SK-N-SH (cell line): ENCODE measurements at regions of chr20 and their contacts with region 1.

Region 1: DNA sequence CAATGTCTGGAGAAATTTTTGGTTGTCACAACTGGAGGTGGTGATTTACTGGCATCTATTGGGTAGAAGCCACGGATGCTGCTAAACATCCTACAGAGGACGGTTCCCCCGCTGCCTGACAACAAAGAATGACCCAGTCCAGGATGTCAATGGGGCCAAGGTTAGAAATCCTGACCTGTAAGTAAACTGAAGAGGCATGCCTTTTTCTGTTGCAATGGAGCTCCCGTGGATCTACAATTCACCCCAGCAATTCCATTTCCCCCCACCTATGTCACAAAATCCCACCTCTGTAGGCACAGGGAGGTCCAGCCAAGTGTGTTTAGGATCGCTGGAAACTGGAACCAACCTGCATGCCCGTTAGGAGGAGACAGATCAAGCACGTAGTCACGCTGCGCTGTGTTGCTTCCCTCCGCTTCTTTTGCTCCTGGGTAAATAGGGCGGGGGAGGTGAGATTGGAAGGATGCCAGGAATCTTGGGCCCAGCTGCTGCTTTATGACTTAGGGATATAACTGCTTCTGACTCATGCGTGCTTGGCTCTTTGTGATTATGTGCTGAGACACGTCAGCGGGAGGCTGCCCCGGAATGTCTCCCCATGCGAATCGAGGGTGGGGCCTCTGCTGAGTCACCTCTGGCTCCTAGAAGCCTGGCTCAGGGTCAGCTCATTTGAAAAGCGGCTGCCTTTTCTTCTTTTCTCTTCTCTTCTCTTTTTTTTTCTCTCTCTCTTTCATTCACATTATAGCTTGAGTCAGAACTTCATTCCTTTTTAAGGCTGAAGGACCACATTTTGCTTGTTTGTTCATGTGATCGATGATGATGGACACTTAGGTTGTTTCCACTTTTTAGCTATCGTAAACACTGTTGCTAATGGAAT is 12.4 kb upstream of the PEDS1 start:
- DNase-seq: peak; percentile 88
- H3K4me3 ChIP-seq: peak overlapping the region; percentile 36 to 62
- H3K27ac ChIP-seq: peak overlapping the region; percentile 87 to 93
- H3K4me1 ChIP-seq: peaks cover 12 to 14% of the 10 kb centered on the region in 2 experiments; a peak in 3 of 4 replicates
- H3K27me3 ChIP-seq: no peaks in the 10 kb centered on the region
- CTCF ChIP-seq: no peak
- EP300 ChIP-seq: peak; percentile 75 to 83; a peak in 3 of 4 replicates
- RAD21 ChIP-seq: no peak

Region 2: DNA sequence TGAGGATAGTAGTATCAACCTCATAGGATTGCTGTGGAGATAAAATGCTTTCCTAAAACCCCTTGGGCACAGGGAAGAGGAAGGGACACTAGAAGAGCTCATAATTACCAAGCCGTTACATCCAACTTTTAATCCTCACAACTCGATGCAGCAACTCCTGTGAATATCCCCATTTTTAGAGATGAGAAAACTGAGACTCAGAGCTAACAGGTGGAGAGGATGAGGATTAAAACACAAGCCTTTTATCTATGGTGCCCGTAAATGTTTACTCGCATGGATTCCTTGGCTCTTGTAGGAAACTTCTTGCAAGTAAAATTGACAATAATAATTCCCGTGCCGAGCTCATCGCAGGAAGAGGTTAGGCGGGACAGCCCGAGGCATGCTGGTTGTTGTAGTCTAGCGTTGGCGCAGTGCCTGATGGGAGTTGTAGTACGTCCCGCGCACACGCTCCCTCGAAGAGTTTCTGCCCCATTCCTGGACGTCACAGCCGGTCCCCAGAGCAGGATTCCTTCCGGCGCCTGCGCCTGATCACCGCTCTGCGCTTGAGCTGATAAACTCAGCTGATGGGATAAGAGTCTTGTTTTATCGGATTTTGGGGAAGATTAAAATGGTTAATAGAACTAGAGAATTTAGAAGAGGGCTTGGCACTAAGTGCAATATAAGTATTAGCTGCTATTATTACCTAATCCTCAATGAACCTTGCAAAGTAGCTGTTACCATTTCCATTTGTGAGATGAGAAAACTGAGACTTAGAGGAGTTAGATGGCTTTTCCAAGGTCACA is 50.1 kb before region 1 on chr20:
- CTCF ChIA-PET with region 1: interaction called, 297 read pairs
- POLR2A ChIA-PET with region 1: interaction called, 5 read pairs
- DNase-seq: peak; percentile 89
- H3K4me3 ChIP-seq: peak overlapping the region; percentile 64 to 70
- H3K27ac ChIP-seq: peak overlapping the region; percentile 52 to 85; a peak in 3 of 4 replicates
- H3K4me1 ChIP-seq: peaks cover 15 to 37% of the 10 kb centered on the region in 2 experiments; a peak in 3 of 4 replicates
- H3K27me3 ChIP-seq: no peaks in the 10 kb centered on the region
- CTCF ChIP-seq: no peak
- EP300 ChIP-seq: no peak
- RAD21 ChIP-seq: no peak

Region 3: GRCh38 chr20:50133474-50134217 is 32.3 kb before region 1 on chr20:
- CTCF ChIA-PET with region 1: interaction called, 23 read pairs
- POLR2A ChIA-PET with region 1: no interaction called
- DNase-seq: no peak
- H3K4me3 ChIP-seq: no peak overlapping the region
- H3K27ac ChIP-seq: no peak overlapping the region
- H3K4me1 ChIP-seq: no peaks in the 10 kb centered on the region; a peak in 2 of 4 replicates
- H3K27me3 ChIP-seq: no peaks in the 10 kb centered on the region
- CTCF ChIP-seq: no peak; the same call in 1 of the 2 replicates
- EP300 ChIP-seq: no peak
- RAD21 ChIP-seq: no peak

Region 4: GRCh38 chr20:50138479-50139393 is 27.2 kb before region 1 on chr20:
- CTCF ChIA-PET with region 1: interaction called, 23 read pairs
- POLR2A ChIA-PET with region 1: no interaction called
- DNase-seq: no peak
- H3K4me3 ChIP-seq: no peak overlapping the region
- H3K27ac ChIP-seq: no peak overlapping the region
- H3K4me1 ChIP-seq: peaks cover 0 to 14% of the 10 kb centered on the region in 2 experiments; a peak in 2 of 4 replicates
- H3K27me3 ChIP-seq: no peaks in the 10 kb centered on the region
- CTCF ChIP-seq: no peak; the same call in 1 of the 2 replicates
- EP300 ChIP-seq: no peak
- RAD21 ChIP-seq: no peak

Region 5: DNA sequence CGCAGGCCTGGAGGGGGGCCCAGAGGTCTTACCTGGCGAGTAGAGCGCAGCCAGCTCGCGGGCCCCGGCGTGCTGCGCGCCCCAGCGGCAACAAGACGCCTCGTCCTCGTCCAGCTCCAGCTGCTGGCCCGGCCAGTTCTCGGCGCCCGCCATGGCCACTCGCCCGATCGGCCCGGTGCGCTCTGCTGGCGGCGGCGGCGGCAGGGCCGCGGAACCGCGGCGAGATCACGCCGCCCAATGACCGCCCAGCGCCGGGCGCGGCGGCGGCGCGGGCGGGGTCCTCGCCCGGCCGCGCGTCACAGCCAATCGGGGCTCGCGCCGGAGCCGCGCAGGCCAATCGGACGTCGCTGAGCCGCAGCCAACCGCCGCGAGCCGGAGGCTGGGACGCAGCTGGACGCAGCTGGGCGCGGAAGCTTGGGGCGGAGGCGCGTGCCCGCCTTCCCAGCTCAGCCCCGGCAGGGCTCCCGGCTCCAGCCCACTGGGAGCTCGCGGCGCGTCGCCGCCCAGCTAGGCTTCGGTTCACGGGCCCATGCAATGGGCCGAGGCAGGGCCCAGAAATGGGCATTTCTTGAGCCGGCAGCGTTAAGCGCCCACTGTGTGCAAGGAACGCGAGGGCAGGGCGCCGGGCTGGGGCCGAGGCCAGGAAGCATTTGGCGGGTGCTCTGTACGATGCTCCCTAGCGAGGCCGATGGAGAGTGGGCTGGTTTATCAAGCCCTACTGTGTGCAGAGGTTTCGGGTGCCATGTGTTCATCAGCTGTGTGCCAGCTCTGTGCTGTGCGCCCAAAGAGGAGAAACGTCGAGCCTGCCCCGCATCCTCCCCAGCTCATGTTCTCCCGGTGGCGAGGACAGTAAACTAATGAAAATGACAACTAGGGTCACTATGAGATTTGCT is 12.2 kb before region 1 on chr20 and contains the start of gene PEDS1:
- CTCF ChIA-PET with region 1: interaction called, 15 read pairs
- POLR2A ChIA-PET with region 1: interaction called, 5 read pairs
- DNase-seq: peak; percentile 99
- H3K4me3 ChIP-seq: peak within 1 kb of the TSS; percentile 78 to 97
- H3K27ac ChIP-seq: peak within 1 kb of the TSS; percentile 41 to 82; a peak in 3 of 4 replicates
- H3K4me1 ChIP-seq: peaks cover 3 to 32% of the 10 kb centered on the region in 2 experiments; a peak in 1 of 4 replicates
- H3K27me3 ChIP-seq: no peaks in the 10 kb centered on the region
- CTCF ChIP-seq: no peak
- EP300 ChIP-seq: peak in 1 of 2 experiments; percentile 23; a peak in 1 of 4 replicates
- RAD21 ChIP-seq: no peak; the same call in 1 of the 2 replicates
- polyA plus RNA-seq, gene PEDS1: 18.3 and 18.4 TPM in 2 replicates

Region 6: DNA sequence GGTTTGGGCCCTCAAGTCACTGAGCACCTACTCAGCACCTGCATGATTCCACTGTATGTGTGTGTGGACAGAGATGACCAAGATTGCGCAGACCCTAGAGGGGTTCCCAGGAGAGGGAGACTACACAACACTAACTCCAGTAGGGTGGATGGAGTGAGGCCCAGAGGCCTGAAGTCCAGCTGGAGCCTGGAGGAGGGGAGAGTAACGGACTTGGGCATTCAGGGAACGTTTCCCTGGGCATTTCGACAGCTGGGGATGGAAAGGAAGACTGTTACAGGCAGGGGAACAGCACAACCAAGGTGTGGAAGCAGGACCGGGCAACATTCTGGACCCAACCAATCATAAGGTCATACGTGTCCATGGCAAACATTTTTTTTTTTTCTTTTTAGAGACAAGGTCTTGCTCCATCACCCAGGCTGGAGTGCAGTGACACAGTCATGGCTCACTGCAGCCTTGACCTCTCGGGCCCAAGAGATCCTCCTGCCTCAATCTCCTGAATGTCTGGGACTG is 13.6 kb after region 1 on chr20:
- CTCF ChIA-PET with region 1: interaction called, 31 read pairs
- POLR2A ChIA-PET with region 1: interaction called, 3 read pairs
- DNase-seq: no peak
- H3K4me3 ChIP-seq: no peak overlapping the region
- H3K27ac ChIP-seq: no peak overlapping the region
- H3K4me1 ChIP-seq: peaks cover 0 to 2% of the 10 kb centered on the region in 2 experiments; a peak in 1 of 4 replicates
- H3K27me3 ChIP-seq: no peaks in the 10 kb centered on the region
- CTCF ChIP-seq: no peak
- EP300 ChIP-seq: no peak
- RAD21 ChIP-seq: no peak

Region 7: DNA sequence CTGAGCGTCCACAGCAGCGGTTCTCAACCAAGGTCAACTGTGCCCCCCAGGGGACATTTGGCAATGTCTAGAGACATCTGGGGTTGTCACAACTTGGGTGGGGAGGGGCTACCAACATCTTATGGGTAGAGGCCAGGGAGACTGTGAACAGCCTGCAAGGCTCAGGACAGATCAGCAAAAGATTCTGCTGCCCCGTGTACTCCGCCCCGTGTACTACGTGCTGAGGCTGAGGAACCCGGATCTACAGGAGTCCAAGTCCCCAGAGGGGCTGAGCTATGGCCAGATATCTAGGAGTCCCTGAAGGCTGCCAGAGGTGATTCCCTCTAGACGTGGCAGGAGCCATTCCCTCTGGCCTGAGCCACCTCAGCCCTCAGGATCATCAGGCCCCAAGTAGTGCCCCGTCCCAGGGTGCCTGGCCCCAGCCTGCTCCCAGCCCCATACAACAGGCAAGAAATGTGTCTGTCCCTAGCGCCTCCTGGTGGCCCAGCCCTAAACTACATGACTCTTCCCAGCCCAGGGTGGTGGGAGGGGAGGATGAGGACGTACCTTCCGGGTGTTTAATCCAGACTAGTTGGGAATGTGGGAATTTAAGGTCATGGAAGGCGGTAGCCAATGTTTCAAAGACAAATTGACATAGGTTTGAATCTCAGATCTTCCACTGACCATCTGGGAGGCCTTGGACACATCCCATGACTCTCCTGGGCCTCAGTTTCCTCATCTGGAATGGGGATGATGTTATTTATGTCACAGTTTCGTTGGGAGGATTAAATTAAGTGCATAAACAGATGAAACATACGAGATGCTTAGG is 294.7 kb after region 1 on chr20:
- CTCF ChIA-PET with region 1: interaction called, 10 read pairs
- POLR2A ChIA-PET with region 1: no interaction called
- DNase-seq: peak; percentile 92
- H3K4me3 ChIP-seq: peak overlapping the region in 1 of 2 experiments; percentile 49; a peak in 1 of 4 replicates
- H3K27ac ChIP-seq: no peak overlapping the region
- H3K4me1 ChIP-seq: peaks cover 0 to 8% of the 10 kb centered on the region in 2 experiments; a peak in 2 of 4 replicates
- H3K27me3 ChIP-seq: no peaks in the 10 kb centered on the region
- CTCF ChIP-seq: peak; percentile 86
- EP300 ChIP-seq: no peak
- RAD21 ChIP-seq: peak; percentile 87